CD4-positive, alpha-beta memory T cell (primary cell): ENCODE measurements at regions of chr7 and their contacts with region 1.

Region 1: GRCh38 chr7:100874577-100875355 is at the start of gene SRRT:
- DNase-seq: peak; percentile 98
- H3K4me3 ChIP-seq: peak within 1 kb of the TSS; percentile 92 to 99
- H3K4me3 Mint-ChIP-seq: peak within 1 kb of the TSS; percentile 98 to 99 (median 99)
- H3K27ac ChIP-seq: peak within 1 kb of the TSS; percentile 91
- H3K27ac Mint-ChIP-seq: peak within 1 kb of the TSS; percentile 96 to 99 (median 98)
- H3K4me1 ChIP-seq: peaks cover 49% of the 10 kb centered on the region
- H3K4me1 Mint-ChIP-seq: peaks cover 26 to 61% (median 47%) of the 10 kb centered on the region in 4 donors
- H3K27me3 ChIP-seq: no peaks in the 10 kb centered on the region
- H3K27me3 Mint-ChIP-seq: no peaks in the 10 kb centered on the region
- total RNA-seq, gene SRRT: 264 to 272 TPM

Region 2: GRCh38 chr7:99971242-99971641 is 903.5 kb before region 1 on chr7:
- CTCF ChIA-PET with region 1: no interaction called
- POLR2A ChIA-PET with region 1: no interaction called
- intact Hi-C with region 1: no loop called
- DNase-seq: no peak
- H3K4me3 ChIP-seq: no peak overlapping the region
- H3K4me3 Mint-ChIP-seq: no peak overlapping the region
- H3K27ac ChIP-seq: no peak overlapping the region
- H3K27ac Mint-ChIP-seq: no peak overlapping the region
- H3K4me1 ChIP-seq: no peaks in the 10 kb centered on the region
- H3K4me1 Mint-ChIP-seq: no peaks in the 10 kb centered on the region
- H3K27me3 ChIP-seq: no peaks in the 10 kb centered on the region
- H3K27me3 Mint-ChIP-seq: peaks cover 6 to 30% of the 10 kb centered on the region in 2 donors

Region 3: GRCh38 chr7:100942045-100942768 is 67.4 kb after region 1 on chr7:
- CTCF ChIA-PET with region 1: no interaction called
- POLR2A ChIA-PET with region 1: no interaction called
- intact Hi-C with region 1: no loop called
- DNase-seq: no peak
- H3K4me3 ChIP-seq: no peak overlapping the region
- H3K4me3 Mint-ChIP-seq: no peak overlapping the region
- H3K27ac ChIP-seq: no peak overlapping the region
- H3K27ac Mint-ChIP-seq: no peak overlapping the region
- H3K4me1 ChIP-seq: no peaks in the 10 kb centered on the region
- H3K4me1 Mint-ChIP-seq: peaks cover 0 to 2% (median 1%) of the 10 kb centered on the region in 4 donors
- H3K27me3 ChIP-seq: no peaks in the 10 kb centered on the region
- H3K27me3 Mint-ChIP-seq: peaks cover 11 to 25% of the 10 kb centered on the region in 2 donors

Region 4: GRCh38 chr7:101085162-101085987 is 210.6 kb after region 1 on chr7 and contains the start of gene TRIM56:
- CTCF ChIA-PET with region 1: no interaction called
- POLR2A ChIA-PET with region 1: interaction called, 11 read pairs
- intact Hi-C with region 1: no loop called
- DNase-seq: peak; percentile 71 to 86 (median 78)
- H3K4me3 ChIP-seq: peak within 1 kb of the TSS; percentile 85 to 87
- H3K4me3 Mint-ChIP-seq: peak within 1 kb of the TSS; percentile 96 to 99 (median 99)
- H3K27ac ChIP-seq: peak within 1 kb of the TSS; percentile 92
- H3K27ac Mint-ChIP-seq: peak within 1 kb of the TSS; percentile 95 to 100 (median 99)
- H3K4me1 ChIP-seq: peaks cover 42% of the 10 kb centered on the region
- H3K4me1 Mint-ChIP-seq: peaks cover 15 to 41% (median 29%) of the 10 kb centered on the region in 4 donors
- H3K27me3 ChIP-seq: no peaks in the 10 kb centered on the region
- H3K27me3 Mint-ChIP-seq: no peaks in the 10 kb centered on the region
- total RNA-seq, gene TRIM56: 79.4 to 81.1 TPM